MCF 10A (cell line): ENCODE measurements at regions of chr14 and their contacts with region 1.

Region 1: GRCh38 chr14:96204151-96205058 is at the start of gene BDKRB2:
- DNase-seq: peak; percentile 85
- H3K4me3 Mint-ChIP-seq: peak within 1 kb of the TSS; percentile 74
- H3K27ac Mint-ChIP-seq: peak within 1 kb of the TSS; percentile 23
- H3K4me1 Mint-ChIP-seq: peaks cover 48% of the 10 kb centered on the region
- H3K27me3 Mint-ChIP-seq: no peaks in the 10 kb centered on the region
- CTCF ChIP-seq: no peak
- total RNA-seq, gene BDKRB2: 1.4 and 2.8 TPM in 2 replicates

Region 2: DNA sequence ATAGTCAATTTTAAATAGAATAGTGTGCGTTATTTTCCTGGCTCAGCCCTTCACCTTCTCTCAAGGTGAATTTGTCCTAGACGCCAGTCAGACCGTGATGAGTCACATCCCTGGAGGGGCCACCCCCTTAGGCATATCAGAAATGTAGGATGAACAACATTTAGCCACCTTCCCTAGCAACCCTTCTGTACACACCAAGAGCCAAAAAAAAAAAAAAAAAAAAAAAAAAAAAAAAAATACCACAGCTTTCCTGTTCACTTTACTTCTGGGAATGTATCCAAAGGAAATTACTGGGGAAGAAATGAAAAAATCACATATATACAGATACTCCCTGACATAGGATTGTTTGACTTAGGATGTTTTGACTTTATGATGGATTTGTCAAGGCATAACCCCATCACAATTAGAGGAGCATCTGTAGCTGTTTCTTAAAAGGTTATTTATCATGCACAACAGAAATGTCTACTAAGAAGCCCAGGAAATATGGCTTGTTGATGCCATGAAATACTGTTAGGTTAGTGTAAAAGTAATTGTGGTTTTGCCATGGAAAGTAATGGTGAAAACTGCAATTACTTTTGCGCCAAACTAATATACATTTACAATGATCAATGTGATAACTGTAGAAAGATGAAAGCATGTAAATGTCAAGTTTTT is 67.9 kb before region 1 on chr14:
- CTCF ChIA-PET with region 1: no interaction called
- POLR2A ChIA-PET with region 1: no interaction called
- intact Hi-C with region 1: loop called (anchors 10 kb)
- DNase-seq: peak; percentile 58
- H3K4me3 Mint-ChIP-seq: no peak overlapping the region
- H3K27ac Mint-ChIP-seq: no peak overlapping the region
- H3K4me1 Mint-ChIP-seq: no peaks in the 10 kb centered on the region
- H3K27me3 Mint-ChIP-seq: peaks cover 15% of the 10 kb centered on the region
- CTCF ChIP-seq: no peak

Region 3: DNA sequence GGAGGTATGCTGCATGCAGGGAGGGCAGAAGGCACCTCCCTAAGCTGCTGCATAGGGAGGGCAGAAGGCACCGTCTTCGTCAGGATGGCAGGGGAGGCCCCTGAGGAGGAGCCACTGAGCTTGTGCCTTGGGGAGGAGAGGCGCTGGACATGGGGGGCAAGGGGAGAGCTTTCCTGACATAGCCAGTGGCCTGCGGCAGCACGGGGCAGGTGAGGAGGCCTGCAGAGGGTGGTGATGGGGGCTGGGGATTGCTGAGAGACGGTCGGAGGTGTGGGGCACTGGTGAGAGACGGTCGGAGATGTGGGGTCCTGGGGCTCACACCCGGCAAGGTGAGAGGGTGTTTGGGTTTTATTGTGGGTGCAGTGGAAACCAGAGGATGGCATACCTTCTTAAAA is 10.1 kb before region 1 on chr14:
- CTCF ChIA-PET with region 1: no interaction called
- POLR2A ChIA-PET with region 1: no interaction called
- intact Hi-C with region 1: no loop called
- DNase-seq: no peak
- H3K4me3 Mint-ChIP-seq: no peak overlapping the region
- H3K27ac Mint-ChIP-seq: no peak overlapping the region
- H3K4me1 Mint-ChIP-seq: peaks cover 8% of the 10 kb centered on the region
- H3K27me3 Mint-ChIP-seq: no peaks in the 10 kb centered on the region
- CTCF ChIP-seq: no peak

Region 4: DNA sequence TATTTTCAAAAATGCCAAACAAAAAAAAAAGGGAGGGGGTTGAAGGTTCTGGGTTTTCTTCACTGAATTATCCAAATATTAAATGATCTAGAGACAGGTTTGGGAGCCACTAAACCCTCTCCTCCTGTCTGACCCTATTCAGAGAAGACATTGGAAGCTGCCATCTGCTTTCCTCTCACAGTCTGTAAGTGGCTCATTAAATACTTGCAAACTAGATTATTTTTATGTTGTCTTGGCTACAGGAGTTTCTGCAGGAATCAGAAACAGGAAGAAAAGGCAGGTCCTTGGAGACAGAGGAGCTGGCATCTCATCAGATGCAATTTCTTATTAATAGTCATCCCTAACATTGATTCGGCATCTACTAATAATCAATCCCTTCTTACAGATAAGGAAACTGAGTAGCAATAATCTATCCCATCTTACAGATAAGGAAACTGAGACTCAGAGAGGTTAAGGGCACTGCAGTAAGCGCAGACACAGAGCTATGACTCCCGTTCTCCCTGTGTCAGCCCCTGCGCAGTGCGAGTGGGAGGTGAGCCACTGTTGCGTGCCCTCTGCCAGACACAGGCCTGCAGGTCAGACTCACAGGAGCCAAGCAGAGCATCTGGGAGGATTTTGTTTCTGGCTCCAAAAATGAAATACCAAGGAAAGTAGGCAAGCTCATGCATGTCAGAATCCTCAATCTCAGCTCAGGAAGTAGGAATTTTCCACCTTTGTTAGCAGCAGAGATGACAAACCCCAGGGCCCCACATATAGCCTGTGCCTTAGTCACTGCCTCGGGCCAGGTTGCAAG is 11.2 kb after region 1 on chr14:
- CTCF ChIA-PET with region 1: interaction called, 3 read pairs
- POLR2A ChIA-PET with region 1: interaction called, 25 read pairs
- intact Hi-C with region 1: no loop called
- DNase-seq: peak; percentile 68
- H3K4me3 Mint-ChIP-seq: no peak overlapping the region
- H3K27ac Mint-ChIP-seq: peak overlapping the region; percentile 19
- H3K4me1 Mint-ChIP-seq: peaks cover 19% of the 10 kb centered on the region
- H3K27me3 Mint-ChIP-seq: no peaks in the 10 kb centered on the region
- CTCF ChIP-seq: no peak

Region 5: GRCh38 chr14:96225745-96226151 is 21.3 kb after region 1 on chr14:
- CTCF ChIA-PET with region 1: interaction called, 3 read pairs
- POLR2A ChIA-PET with region 1: interaction called, 10 read pairs
- intact Hi-C with region 1: no loop called
- DNase-seq: peak; percentile 42
- H3K4me3 Mint-ChIP-seq: no peak overlapping the region
- H3K27ac Mint-ChIP-seq: no peak overlapping the region
- H3K4me1 Mint-ChIP-seq: peaks cover 26% of the 10 kb centered on the region
- H3K27me3 Mint-ChIP-seq: no peaks in the 10 kb centered on the region
- CTCF ChIP-seq: no peak

Region 6: DNA sequence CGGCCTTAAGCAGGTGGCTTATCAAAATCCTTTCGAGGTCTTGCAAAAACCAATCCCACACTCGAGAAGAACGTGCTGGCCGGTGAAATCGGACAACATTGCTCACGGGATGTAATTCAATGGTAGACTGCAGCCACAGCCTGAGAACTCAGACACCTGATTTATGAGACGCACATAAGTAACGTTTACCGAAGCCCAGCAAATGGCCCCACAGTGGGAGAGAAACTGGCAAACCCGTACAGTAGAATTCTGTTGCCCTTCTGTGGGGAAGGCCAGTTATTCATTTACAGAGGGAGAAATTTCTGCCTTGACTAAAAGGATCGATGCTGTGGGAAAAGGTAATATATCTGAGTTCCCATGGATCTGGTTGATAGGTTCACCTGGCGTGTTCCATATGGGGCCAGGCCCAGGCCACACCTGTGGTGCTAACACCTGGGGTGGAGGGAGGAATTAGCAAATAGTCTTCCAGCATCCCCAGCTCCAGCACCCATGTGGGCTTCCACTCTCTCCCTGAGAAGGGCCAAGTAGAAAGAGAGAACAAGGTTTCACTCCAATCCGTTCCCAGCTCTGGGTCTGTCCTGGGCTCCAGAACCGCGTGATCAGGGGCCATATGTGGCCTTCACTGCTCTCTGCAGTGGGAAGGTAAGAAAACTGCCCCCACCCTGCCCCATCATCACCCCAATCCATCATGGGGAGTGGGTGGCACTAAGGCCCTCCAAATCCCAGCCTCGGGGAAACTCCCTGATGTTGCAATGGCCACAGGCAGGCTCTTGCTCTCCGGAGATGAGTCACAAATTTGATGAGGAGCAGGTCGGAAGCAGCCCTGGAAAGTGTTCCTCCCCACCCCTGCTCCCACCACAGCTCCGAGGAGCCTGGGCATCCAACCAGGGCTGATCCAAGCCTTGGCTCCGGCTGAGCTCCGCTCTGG is 64.3 kb after region 1 on chr14:
- CTCF ChIA-PET with region 1: no interaction called
- POLR2A ChIA-PET with region 1: no interaction called
- intact Hi-C with region 1: loop called (anchors 2 kb)
- DNase-seq: peak; percentile 98
- H3K4me3 Mint-ChIP-seq: peak overlapping the region; percentile 43
- H3K27ac Mint-ChIP-seq: peak overlapping the region; percentile 78
- H3K4me1 Mint-ChIP-seq: peaks cover 45% of the 10 kb centered on the region
- H3K27me3 Mint-ChIP-seq: no peaks in the 10 kb centered on the region
- CTCF ChIP-seq: no peak